Common myeloid progenitor, CD34-positive (primary cell): ENCODE measurements at regions of chr19 and their contacts with region 1.

Region 1: DNA sequence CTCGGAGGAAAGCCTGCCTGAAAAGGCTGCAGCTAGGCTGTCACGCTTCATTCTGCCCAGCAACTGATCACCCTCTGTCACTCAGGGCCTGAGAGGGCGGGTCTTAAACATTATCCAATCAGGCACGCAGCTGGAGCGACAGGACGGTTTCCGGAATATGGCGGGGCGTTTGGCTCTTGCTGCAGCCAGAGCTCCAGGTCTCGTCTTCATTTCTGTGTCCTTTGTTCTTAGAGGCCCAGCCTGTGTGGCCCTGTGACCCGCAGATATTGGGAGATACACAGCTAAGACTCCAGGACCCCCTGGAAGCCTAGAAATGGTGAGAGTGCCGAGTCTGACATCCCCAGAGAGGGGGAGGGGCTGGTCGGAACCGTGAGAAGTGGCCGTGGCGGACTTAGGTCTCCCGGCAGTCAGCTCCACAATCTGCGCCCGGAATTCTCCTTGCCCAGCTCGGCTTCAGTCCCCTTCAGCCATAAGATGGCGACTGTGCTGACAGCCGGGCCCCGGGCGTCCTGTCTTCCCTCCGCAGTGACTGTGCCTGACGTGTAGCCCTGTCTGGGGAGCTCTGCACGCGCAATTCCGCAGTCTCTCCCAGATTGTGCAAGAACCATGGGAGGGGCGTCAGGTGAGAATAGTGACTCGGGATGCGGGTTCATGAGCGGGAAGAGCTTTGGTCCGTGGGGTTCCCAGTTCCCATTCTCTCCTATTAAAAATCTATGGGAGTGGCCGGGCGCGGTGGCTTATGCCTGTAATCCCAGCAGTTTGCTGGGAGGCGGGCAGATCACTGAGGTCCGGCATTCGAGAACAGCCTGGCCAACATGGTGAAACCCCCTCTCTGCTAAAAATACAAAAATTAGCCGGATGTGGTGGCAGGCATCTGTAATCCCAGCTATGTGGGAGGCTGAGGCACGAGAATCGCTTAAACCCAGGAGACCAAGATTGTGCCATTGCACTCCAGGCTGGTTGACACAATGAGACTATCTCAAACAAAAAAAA is at the start of gene ZNF429:
- DNase-seq: peak; percentile 96 to 98 (median 96)
- H3K4me3 ChIP-seq: peak within 1 kb of the TSS; percentile 70 to 98 (median 96)
- H3K27ac ChIP-seq: peak within 1 kb of the TSS; percentile 90 to 96
- H3K4me1 ChIP-seq: peaks cover 5 to 22% (median 9%) of the 10 kb centered on the region in 4 experiments
- H3K27me3 ChIP-seq: no peaks in the 10 kb centered on the region

Region 2: DNA sequence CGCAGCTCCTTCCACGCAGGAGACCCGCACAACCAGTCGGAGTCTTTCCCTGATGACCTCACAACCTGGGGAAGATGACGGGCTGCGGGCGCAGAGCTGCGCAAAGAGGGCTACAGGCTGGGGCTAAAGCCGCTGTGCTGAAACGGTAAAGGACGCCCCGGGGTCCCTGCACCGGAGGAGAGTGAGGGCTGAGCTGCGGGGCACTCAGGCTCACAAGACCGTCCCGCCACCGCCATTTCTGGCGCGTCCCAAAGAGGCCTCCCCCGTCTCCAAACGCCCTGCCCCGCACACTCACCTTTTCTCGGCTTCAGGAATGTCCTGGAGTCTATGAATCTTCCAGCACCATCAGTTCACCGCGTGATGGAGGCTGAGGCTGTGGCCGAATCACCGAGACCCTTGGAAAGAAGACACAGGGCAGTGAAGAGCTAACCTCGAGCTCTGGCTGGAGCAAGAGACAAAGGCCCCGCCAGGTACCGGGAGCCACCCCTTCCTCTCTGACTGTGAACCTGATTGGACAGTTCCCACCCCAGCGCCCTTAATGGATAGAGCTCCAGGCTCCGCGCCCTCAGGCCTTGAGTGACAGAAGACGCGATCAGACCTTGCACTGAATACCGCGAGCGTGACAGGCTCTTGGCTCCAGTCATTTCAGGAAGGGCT is 42.2 kb before region 1 on chr19:
- CTCF ChIA-PET with region 1: no interaction called
- POLR2A ChIA-PET with region 1: no interaction called
- DNase-seq: peak; percentile 88 to 97 (median 96)
- H3K4me3 ChIP-seq: peak overlapping the region; percentile 48 to 96 (median 84)
- H3K27ac ChIP-seq: peak overlapping the region; percentile 25 to 83
- H3K4me1 ChIP-seq: peaks cover 0 to 8% (median 1%) of the 10 kb centered on the region in 4 experiments
- H3K27me3 ChIP-seq: no peaks in the 10 kb centered on the region

Region 3: GRCh38 chr19:21532904-21533303 is 27.1 kb after region 1 on chr19:
- CTCF ChIA-PET with region 1: no interaction called
- POLR2A ChIA-PET with region 1: no interaction called
- DNase-seq: no peak
- H3K4me3 ChIP-seq: no peak overlapping the region
- H3K27ac ChIP-seq: no peak overlapping the region
- H3K4me1 ChIP-seq: no peaks in the 10 kb centered on the region
- H3K27me3 ChIP-seq: no peaks in the 10 kb centered on the region

Region 4: DNA sequence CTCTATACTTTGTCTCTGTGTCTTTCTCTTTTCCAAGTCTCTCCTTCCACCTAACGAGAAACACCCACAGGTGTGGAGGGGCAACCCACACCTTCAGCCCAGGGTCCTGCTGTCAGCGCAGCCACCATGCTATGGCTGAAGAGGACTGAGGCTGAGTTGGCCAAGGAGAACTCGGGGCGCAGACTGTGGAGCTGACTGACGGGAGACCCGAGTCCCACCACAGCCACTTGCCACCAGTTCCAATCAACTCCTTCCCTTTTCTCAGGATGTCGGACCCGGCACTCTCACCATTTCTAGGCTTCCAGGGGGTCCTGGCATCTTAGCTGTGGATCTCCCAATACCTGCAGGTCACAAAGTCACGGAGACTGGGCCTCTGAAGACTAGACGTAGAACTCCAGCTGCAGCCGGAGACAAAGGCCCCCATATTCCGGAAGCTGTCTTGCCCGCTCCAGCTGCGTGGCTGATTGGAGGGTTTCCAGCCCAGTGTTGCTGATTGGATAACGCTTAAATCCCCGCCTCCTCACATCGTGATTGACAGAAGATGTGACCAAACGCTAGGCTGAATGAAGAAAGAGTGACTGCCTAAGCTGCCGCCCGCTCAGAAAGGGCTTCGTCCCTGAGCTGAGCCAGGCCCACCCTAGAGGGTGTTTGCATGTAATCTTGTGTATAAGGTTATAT is 63.2 kb after region 1 on chr19:
- CTCF ChIA-PET with region 1: interaction called, 3 read pairs
- POLR2A ChIA-PET with region 1: interaction called, 10 read pairs
- DNase-seq: peak; percentile 96 to 98 (median 97)
- H3K4me3 ChIP-seq: peak overlapping the region in 6 of 7 experiments; percentile 49 to 84 (median 70)
- H3K27ac ChIP-seq: peak overlapping the region in 1 of 2 experiments; percentile 92
- H3K4me1 ChIP-seq: peaks cover 0 to 12% (median 0%) of the 10 kb centered on the region in 4 experiments
- H3K27me3 ChIP-seq: no peaks in the 10 kb centered on the region

Region 5: GRCh38 chr19:21595185-21595584 is 89.4 kb after region 1 on chr19:
- CTCF ChIA-PET with region 1: no interaction called
- POLR2A ChIA-PET with region 1: no interaction called
- DNase-seq: no peak
- H3K4me3 ChIP-seq: no peak overlapping the region
- H3K27ac ChIP-seq: no peak overlapping the region
- H3K4me1 ChIP-seq: peaks cover 4 to 34% (median 22%) of the 10 kb centered on the region in 4 experiments
- H3K27me3 ChIP-seq: no peaks in the 10 kb centered on the region

Region 6: DNA sequence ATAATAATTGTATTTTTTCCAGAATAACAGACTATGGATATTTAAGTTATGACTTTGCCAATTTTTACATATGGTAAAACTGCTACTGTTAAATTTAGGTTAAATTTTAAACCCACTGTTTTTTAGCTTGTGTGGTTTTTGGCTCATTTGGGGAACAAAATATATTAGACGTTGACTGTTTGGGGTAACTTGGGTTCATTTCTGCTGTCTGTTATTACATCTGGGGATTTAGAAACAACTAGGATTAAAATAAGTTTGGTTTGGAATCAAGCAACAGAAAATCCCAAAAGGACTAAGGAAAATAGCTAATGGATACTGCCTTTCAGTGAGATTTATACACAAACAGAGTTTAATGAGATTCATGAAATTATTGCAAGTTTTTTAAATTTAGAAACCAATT is 168.7 kb after region 1 on chr19:
- CTCF ChIA-PET with region 1: interaction called, 12 read pairs
- POLR2A ChIA-PET with region 1: interaction called, 5 read pairs
- DNase-seq: peak in 2 of 3 donors; percentile 8 to 31
- H3K4me3 ChIP-seq: no peak overlapping the region
- H3K27ac ChIP-seq: no peak overlapping the region
- H3K4me1 ChIP-seq: peaks cover 0 to 52% (median 11%) of the 10 kb centered on the region in 4 experiments
- H3K27me3 ChIP-seq: no peaks in the 10 kb centered on the region